ENCODE measurements at regions of chr6 and their contacts with region 1.

Region 1: DNA sequence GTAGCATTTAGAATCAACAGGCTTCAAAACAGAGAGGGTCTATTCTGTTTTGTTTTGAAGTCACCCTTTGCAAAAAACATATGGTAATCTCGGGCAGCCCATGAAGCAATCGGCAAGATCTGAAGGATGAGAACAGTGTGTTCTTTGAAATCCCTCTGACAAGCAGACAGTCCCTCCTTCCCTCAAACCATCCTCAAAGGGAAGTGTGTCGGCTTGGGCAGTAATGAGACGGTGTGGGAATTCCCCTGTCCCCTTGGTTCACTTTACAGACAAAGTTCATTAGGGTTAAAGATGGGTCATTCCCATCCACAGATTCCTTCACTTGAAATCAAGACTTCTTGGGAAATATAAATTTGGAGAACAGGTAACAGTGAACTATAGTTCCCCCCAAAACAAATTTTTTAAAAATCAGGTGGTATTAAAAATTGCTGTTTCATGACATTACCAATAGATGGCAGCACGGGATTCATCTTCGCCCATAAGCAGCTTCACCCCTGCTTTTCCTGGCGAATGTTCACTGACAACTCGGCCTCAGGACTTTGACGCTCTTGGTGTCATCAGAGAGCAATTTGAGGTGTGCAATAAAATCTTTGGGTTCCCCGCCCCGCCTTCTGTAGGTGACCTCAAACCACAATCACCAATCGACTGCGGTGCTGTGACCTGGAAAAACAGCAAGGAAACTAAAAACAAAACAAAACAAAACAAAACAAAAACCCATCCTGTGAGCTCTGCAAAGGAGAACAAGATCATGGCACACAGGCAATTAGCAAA is 159.3 kb upstream of the TNFAIP3 start:
- DNase-seq: no peak
- H3K4me3 ChIP-seq: no peak overlapping the region
- H3K27me3 ChIP-seq: no peaks in the 10 kb centered on the region
- CTCF ChIP-seq: peak; percentile 71

Region 2: DNA sequence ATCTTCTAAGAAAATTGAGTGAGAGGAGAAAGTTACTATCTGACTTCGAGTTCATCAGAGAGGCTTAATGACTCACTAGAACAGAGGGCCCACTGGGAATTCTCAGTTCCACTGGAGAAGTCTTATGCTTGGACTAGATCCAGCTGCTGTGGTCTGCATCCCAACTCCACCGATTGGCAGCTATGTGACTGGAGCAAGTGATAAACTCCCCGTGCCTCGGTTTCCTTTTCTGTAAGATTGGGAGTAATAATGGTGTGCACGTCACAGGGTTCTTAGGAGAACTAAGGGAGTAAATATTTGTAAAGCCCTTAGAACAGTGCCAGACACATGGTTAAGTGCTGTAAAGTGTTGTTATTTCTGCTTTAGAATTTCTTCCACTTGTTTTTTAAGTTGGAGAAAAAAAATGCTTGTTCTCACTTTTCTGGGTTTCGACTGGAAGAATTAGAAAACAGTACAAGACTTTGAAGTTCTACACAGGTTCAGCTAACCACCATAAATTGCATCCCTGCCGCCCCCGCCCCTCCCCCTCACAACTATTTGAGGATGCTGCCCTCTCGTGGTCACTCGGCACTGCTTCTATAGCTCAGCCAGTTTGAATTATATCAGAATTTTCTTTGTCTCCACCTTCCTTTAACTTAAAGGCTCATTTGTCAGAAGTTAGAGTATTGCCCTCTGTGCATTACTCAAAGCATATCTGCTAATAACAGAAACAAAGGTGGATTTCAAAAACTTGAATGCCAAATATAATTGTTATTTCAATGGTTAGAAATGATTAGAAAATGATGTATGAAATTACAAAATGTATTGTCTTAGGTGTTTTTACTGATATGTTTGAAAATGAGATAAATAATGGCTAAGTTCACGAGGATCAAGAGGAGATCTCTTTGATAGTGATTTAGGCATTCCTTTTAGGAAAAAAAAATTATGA is 393.6 kb before region 1 on chr6:
- CTCF ChIA-PET with region 1: no interaction called
- POLR2A ChIA-PET with region 1: no interaction called
- DNase-seq: no peak
- H3K4me3 ChIP-seq: no peak overlapping the region
- H3K27me3 ChIP-seq: no peaks in the 10 kb centered on the region
- CTCF ChIP-seq: peak; percentile 83

Region 3: DNA sequence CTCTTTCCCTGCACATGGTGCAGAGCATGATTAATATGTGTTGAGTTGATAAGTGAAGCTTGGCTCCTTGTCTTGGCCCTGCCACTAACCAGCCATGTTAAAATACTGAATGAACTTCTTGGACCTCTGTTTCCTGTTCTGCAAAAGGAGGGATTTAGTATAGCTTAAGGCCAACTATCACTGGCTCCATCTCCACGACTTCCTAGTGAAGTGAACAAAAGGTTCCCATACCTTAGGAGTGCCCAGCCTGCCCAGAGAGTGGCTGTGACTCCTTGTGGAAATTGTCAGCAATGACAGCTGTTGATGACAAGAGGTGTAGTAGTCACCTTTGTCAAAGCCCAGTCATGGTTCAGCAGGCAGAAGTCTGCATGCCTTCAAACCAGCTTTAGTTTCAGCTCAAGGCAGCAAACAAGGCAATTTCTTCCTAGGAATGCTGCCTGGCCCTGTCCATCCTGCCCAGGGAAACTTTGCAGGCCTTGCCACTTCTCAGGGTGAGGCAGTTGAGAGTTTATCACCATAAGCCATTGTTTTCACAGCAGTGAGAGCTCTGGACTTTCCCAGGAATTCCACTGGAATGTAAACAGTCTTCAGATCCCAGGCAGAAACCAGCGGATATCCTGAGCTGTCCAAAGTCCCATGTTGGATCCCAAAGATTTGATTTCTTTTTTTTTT is 10.4 kb before region 1 on chr6:
- CTCF ChIA-PET with region 1: interaction called, 15 read pairs
- POLR2A ChIA-PET with region 1: no interaction called
- DNase-seq: no peak
- H3K4me3 ChIP-seq: no peak overlapping the region
- H3K27me3 ChIP-seq: no peaks in the 10 kb centered on the region
- CTCF ChIP-seq: peak; percentile 6; the same call in 1 of the 2 replicates

Region 4: DNA sequence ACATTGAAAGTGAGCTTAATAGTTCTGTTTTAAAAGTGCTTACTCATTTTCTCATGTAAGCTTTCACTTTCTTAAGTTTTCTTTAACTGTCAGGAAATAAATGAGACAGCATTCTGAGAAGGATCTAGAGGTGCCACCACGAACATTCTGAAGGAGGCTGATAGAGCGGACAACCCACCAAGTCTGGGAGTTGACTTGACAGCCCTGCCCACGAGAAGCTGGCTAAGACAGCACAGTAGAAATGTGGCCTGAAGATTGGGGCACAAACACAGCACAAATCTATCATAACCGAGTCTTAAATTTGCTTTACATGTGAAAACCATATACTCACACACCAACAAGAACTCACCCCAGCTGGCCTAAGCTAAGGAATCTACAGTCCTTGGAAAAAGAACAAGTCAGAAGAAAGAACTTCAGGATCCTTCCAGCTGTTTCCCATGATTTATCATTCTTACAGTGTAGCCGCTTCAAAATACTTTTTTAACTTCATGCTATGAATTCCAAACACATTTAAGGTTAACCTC is 15.0 kb after region 1 on chr6:
- CTCF ChIA-PET with region 1: interaction called, 12 read pairs
- POLR2A ChIA-PET with region 1: no interaction called
- DNase-seq: no peak
- H3K4me3 ChIP-seq: no peak overlapping the region
- H3K27me3 ChIP-seq: no peaks in the 10 kb centered on the region
- CTCF ChIP-seq: no peak

Region 5: GRCh38 chr6:137938770-137939379 is 231.1 kb after region 1 on chr6:
- CTCF ChIA-PET with region 1: interaction called, 37 read pairs
- POLR2A ChIA-PET with region 1: no interaction called
- DNase-seq: no peak
- H3K4me3 ChIP-seq: no peak overlapping the region
- H3K27me3 ChIP-seq: no peaks in the 10 kb centered on the region
- CTCF ChIP-seq: no peak

Measured in BJ (cell line).